AG04450 (cell line): ENCODE measurements at regions of chr3 and their contacts with region 1.

Region 1: GRCh38 chr3:97821810-97822775 is at the start of gene CRYBG3:
- DNase-seq: peak; percentile 27
- H3K4me3 ChIP-seq: peak within 1 kb of the TSS; percentile 82
- H3K27ac ChIP-seq: peak within 1 kb of the TSS; percentile 72
- H3K27me3 ChIP-seq: no peaks in the 10 kb centered on the region
- CTCF ChIP-seq: peak; percentile 45; the same call in 1 of the 2 replicates
- polyA plus RNA-seq, gene CRYBG3: 7.4 and 9.9 TPM in 2 replicates

Region 2: GRCh38 chr3:97804471-97804870 is 17.6 kb before region 1 on chr3:
- CTCF ChIA-PET with region 1: interaction called, 12 read pairs
- POLR2A ChIA-PET with region 1: no interaction called
- DNase-seq: no peak
- H3K4me3 ChIP-seq: no peak overlapping the region
- H3K27ac ChIP-seq: no peak overlapping the region
- H3K27me3 ChIP-seq: no peaks in the 10 kb centered on the region
- CTCF ChIP-seq: no peak